ENCODE measurements at regions of chr1 and their contacts with region 1.

Region 1: DNA sequence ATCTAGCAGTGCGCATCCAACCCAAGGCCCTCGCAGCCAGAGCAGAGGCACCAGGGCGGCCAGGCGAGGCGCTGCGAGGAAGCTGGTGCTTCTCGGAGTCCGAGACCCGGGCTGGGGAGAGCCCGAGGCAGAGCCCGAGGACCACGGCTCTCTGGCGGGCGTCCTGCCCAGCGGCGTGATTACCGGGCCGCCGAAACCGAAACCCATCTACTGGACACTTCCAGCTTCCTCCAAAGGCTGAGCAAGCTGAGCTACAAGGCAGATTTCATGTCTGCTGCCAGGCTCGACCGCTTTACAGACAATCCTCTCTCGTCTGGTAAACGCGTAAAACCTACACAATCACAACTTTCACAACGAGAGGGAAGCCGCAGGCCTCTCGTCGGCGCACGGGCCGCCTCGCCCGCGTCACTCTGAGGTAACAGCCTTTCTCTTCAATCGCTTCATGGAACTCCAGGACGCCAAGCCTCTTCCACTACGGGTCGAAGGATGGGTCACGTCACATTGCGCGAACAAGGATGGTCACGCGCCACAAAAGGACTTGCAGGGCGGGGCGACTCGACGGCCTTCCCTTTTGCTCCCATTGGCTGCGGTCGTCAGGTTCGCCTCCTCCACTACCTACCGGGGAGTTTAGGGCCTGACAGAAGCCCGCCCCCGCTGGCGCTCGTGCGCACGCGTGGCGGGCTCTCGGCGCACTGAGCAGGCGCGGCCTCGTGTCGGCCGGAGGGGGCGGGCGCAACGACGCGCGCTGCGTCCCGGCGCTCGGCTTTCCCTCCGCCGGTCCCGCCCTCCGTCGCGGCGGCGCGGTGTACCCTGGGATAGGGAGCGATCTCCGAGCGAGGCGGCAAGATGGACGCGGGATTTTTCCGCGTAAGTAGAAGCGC is at the start of gene SRRM1:
- DNase-seq: peak; percentile 96 to 100 (median 99)
- ATAC-seq: peak; percentile 93
- H3K4me3 ChIP-seq: peak within 1 kb of the TSS; percentile 83
- H3K4me3 Mint-ChIP-seq: peak within 1 kb of the TSS; percentile 88 to 100 (median 95)
- H3K27ac ChIP-seq: peak within 1 kb of the TSS; percentile 100
- H3K27ac Mint-ChIP-seq: peak within 1 kb of the TSS; percentile 95 to 100 (median 99)
- H3K4me1 ChIP-seq: peaks cover 26 to 32% of the 10 kb centered on the region in 2 donors
- H3K4me1 Mint-ChIP-seq: peaks cover 26 to 58% (median 51%) of the 10 kb centered on the region in 7 donors
- H3K27me3 ChIP-seq: no peaks in the 10 kb centered on the region
- H3K27me3 Mint-ChIP-seq: peaks cover 0 to under 1% (median 0%) of the 10 kb centered on the region in 5 donors
- total RNA-seq, gene SRRM1: 188 to 342 (median 246) TPM

Region 2: GRCh38 chr1:23344111-23344986 is 1298.4 kb before region 1 on chr1 and contains the start of gene HNRNPR:
- CTCF ChIA-PET with region 1: no interaction called
- POLR2A ChIA-PET with region 1: interaction called, 3 read pairs
- intact Hi-C with region 1: loop called in 1 of 2 experiments (anchors 10 kb)
- DNase-seq: peak; percentile 90 to 99 (median 97)
- ATAC-seq: peak; percentile 97
- H3K4me3 ChIP-seq: peak within 1 kb of the TSS; percentile 89
- H3K4me3 Mint-ChIP-seq: peak within 1 kb of the TSS; percentile 81 to 100 (median 94)
- H3K27ac ChIP-seq: peak within 1 kb of the TSS; percentile 83
- H3K27ac Mint-ChIP-seq: peak within 1 kb of the TSS; percentile 89 to 98 (median 97)
- H3K4me1 ChIP-seq: peaks cover 25 to 28% of the 10 kb centered on the region in 2 donors
- H3K4me1 Mint-ChIP-seq: peaks cover 34 to 47% (median 45%) of the 10 kb centered on the region in 7 donors
- H3K27me3 ChIP-seq: no peaks in the 10 kb centered on the region
- H3K27me3 Mint-ChIP-seq: no peaks in the 10 kb centered on the region
- total RNA-seq, gene HNRNPR: 97.4 to 235 (median 117) TPM

Region 3: DNA sequence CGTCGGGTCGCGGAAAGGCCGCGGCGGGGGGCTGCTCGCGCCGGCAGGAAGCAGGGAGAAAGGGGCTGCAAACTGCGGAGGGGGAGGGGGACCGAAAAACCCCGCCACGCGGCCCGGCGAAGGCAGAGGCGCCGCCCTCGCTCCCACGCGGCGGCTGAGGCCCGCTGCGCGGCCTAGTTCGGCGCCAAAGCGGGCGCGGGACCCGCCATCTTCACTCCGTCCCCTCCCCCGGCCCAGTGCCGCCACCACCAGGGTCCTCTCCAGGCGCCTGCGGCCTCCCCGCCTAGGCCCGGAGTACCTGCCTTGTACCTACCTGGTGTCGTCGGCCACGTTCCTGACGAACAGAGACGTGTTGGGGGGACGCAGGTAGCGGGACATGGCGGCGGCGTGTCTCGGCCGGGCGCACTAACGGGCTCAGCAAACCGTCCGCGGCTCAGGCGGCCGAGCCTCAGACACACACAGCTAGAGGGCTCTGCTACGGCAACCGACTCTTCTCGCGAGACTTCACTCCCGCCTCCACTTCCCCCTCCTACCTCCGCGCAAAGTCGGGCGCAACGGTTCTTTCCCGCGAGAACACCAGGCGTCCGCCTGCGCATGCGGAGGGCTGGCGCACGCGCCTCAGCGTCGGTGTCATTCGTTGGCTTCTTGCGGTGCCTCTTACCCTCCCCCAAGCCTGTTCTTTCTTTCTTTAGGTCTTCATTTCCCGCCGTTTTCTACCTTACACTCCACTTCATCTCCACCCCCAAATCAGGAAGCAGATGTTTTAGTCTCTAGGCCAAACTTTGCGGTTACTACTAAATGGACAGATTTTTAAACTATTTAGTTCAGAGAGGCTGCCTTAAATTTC is 662.6 kb before region 1 on chr1 and contains the start of gene SRSF10:
- CTCF ChIA-PET with region 1: no interaction called
- POLR2A ChIA-PET with region 1: no interaction called
- intact Hi-C with region 1: loop called (anchors 2 to 5 kb)
- DNase-seq: peak; percentile 91 to 99 (median 98)
- ATAC-seq: peak; percentile 97
- H3K4me3 ChIP-seq: peak within 1 kb of the TSS; percentile 75
- H3K4me3 Mint-ChIP-seq: peak within 1 kb of the TSS; percentile 87 to 98 (median 94)
- H3K27ac ChIP-seq: peak within 1 kb of the TSS; percentile 98
- H3K27ac Mint-ChIP-seq: peak within 1 kb of the TSS; percentile 94 to 99 (median 96)
- H3K4me1 ChIP-seq: peaks cover 31 to 43% of the 10 kb centered on the region in 2 donors
- H3K4me1 Mint-ChIP-seq: peaks cover 39 to 57% (median 53%) of the 10 kb centered on the region in 7 donors
- H3K27me3 ChIP-seq: no peaks in the 10 kb centered on the region
- H3K27me3 Mint-ChIP-seq: peaks cover 0 to 4% (median 0%) of the 10 kb centered on the region in 5 donors
- total RNA-seq, gene SRSF10: 170 to 252 (median 193) TPM

Region 4: DNA sequence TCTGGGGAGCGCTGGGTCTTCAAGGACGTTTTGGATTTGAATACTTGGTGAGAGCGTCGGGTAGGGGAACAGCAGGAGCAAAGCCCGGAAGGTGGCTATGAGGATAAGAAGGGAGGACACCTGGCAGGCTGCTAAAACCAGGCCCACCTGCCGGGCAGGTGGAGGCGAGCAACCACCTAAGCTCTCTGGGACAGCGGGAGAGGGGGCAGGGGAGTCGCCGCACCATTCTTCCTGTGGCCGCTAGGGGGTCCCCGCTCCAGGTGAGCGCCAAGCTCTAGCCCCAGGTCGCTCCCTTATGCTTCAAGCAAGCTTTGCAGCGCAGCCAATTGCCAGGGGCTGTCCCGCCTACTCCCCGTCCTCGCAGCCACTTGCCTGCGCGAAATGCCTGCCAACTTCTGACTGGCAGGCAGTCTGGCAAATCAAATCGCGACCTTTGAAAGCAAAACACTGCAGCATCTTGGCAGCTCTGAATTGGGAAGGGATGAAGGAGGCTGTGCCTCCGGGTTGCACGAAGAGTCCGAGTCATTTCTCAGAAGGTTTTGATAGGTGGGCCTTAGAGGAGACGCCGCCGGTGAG is 227.3 kb before region 1 on chr1 and contains the start of gene NIPAL3:
- CTCF ChIA-PET with region 1: interaction called, 4 read pairs
- POLR2A ChIA-PET with region 1: interaction called, 3 read pairs
- intact Hi-C with region 1: loop called (anchors 1 kb)
- DNase-seq: peak; percentile 81 to 99 (median 97)
- ATAC-seq: peak; percentile 98
- H3K4me3 ChIP-seq: peak within 1 kb of the TSS; percentile 76
- H3K4me3 Mint-ChIP-seq: peak within 1 kb of the TSS; percentile 95 to 100 (median 98)
- H3K27ac ChIP-seq: peak within 1 kb of the TSS; percentile 74
- H3K27ac Mint-ChIP-seq: peak within 1 kb of the TSS; percentile 75 to 99 (median 90)
- H3K4me1 ChIP-seq: peaks cover 23 to 44% of the 10 kb centered on the region in 2 donors
- H3K4me1 Mint-ChIP-seq: peaks cover 51 to 91% (median 75%) of the 10 kb centered on the region in 7 donors
- H3K27me3 ChIP-seq: no peaks in the 10 kb centered on the region
- H3K27me3 Mint-ChIP-seq: no peaks in the 10 kb centered on the region
- total RNA-seq, gene NIPAL3: 35.5 to 65.0 (median 54.5) TPM

Region 5: DNA sequence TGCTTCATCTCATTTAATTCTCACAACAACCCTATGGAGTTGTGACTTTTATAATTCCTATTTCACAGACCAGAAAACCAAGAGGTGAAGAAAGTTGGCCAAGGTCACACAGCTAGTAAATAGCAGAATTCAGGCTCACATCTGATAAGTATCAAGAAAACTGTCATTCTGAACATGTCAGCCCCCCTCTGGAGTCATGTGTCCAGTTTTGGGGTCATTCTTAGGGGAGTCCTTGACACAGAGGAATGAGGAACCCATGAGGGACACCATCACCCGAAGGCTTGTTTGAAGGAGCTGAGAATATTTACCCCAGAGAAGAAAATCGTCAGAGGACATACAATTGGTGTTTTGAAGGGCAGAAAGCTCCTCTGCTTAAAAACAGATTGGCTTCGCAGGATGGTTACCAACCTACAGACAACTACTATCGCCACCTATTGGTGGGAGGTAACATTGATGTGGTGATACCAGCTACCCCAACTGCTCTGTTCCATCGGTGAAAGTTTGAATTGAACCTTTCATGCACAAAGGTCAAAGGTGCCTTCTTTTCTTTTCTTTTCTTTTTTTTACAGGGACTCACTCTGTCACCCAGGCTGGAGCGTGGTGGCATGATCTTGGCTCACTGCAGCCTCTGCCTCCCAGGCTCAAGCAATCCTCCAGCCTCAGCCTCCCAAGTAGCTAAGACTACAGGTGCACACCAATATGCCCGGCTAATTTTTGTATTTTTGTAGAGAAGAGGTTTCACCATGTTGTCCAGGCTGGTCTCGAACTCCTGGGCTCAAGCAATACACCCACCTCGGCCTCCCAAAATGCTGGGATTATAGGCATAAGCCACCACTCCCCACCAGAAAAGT is 55.5 kb before region 1 on chr1:
- CTCF ChIA-PET with region 1: interaction called, 3 read pairs
- POLR2A ChIA-PET with region 1: no interaction called
- intact Hi-C with region 1: loop called in 1 of 2 experiments (anchors 5 kb)
- DNase-seq: peak in 8 of 9 donors; percentile 32 to 83 (median 76)
- ATAC-seq: peak; percentile 98
- H3K4me3 ChIP-seq: no peak overlapping the region
- H3K4me3 Mint-ChIP-seq: peak overlapping the region in 4 of 10 donors; percentile 12 to 38 (median 35)
- H3K27ac ChIP-seq: peak overlapping the region; percentile 35
- H3K27ac Mint-ChIP-seq: peak overlapping the region in 8 of 9 donors; percentile 78 to 93 (median 85)
- H3K4me1 ChIP-seq: peaks cover 0 to 7% of the 10 kb centered on the region in 2 donors
- H3K4me1 Mint-ChIP-seq: peaks cover 0 to 9% (median 7%) of the 10 kb centered on the region in 7 donors
- H3K27me3 ChIP-seq: no peaks in the 10 kb centered on the region
- H3K27me3 Mint-ChIP-seq: peaks cover 0 to 14% (median 0%) of the 10 kb centered on the region in 5 donors

Region 6: GRCh38 chr1:24779689-24780464 is 137.2 kb after region 1 on chr1:
- CTCF ChIA-PET with region 1: no interaction called
- POLR2A ChIA-PET with region 1: no interaction called
- intact Hi-C with region 1: no loop called
- DNase-seq: no peak
- ATAC-seq: no peak
- H3K4me3 ChIP-seq: no peak overlapping the region
- H3K4me3 Mint-ChIP-seq: no peak overlapping the region
- H3K27ac ChIP-seq: no peak overlapping the region
- H3K27ac Mint-ChIP-seq: peak overlapping the region in 1 of 9 donors; percentile 15
- H3K4me1 ChIP-seq: no peaks in the 10 kb centered on the region
- H3K4me1 Mint-ChIP-seq: no peaks in the 10 kb centered on the region
- H3K27me3 ChIP-seq: no peaks in the 10 kb centered on the region
- H3K27me3 Mint-ChIP-seq: peaks cover 0 to 6% (median 0%) of the 10 kb centered on the region in 5 donors

Region 7: GRCh38 chr1:25232027-25232865 is 589.5 kb after region 1 on chr1 and contains the start of gene SYF2:
- CTCF ChIA-PET with region 1: no interaction called
- POLR2A ChIA-PET with region 1: interaction called, 4 read pairs
- intact Hi-C with region 1: loop called (anchors 1 to 2 kb)
- DNase-seq: peak; percentile 71 to 93 (median 90)
- ATAC-seq: peak; percentile 94
- H3K4me3 ChIP-seq: peak within 1 kb of the TSS; percentile 92
- H3K4me3 Mint-ChIP-seq: no peak within 1 kb of the TSS
- H3K27ac ChIP-seq: peak within 1 kb of the TSS; percentile 91
- H3K27ac Mint-ChIP-seq: no peak within 1 kb of the TSS
- H3K4me1 ChIP-seq: peaks cover 14 to 15% of the 10 kb centered on the region in 2 donors
- H3K4me1 Mint-ChIP-seq: peaks cover 18 to 33% (median 30%) of the 10 kb centered on the region in 7 donors
- H3K27me3 ChIP-seq: no peaks in the 10 kb centered on the region
- H3K27me3 Mint-ChIP-seq: no peaks in the 10 kb centered on the region
- total RNA-seq, gene SYF2: 44.4 to 83.3 (median 59.4) TPM